ENCODE measurements at regions of chr19 and their contacts with region 1.

Region 1: DNA sequence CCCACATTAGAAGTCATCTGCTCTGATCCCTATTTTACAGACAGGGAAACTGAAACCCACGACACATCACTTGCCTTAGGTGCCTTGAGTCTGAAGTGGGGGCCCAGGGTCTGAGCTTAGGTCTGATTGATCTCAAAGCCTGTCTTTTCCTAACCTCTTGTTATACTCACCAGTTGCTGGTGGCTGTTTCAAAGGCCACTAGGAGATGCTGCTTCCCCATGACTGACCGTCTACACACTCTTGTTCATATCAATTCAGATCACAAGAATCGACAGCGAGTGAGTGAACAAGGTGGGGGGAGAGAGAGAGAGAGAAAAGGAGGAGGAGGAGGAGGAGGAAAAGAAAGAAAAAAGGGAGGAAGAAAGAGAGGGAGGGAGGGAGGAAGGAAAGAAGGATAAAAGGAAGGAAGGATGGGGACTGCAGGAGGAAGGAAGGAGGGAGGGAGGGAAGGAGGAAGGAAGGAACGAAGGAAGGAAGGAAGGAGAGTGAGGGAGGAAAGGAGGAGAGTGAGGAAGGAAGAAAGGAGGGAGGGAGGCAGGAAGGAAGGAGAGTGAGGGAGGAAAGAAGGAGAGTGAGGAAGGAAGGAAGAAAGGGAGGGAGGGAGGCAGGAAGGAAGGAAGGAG is 3.3 kb downstream of the OR10H1 start:
- DNase-seq: no peak
- ATAC-seq: no peak
- H3K4me3 ChIP-seq: no peak overlapping the region
- H3K27ac ChIP-seq: no peak overlapping the region
- H3K4me1 ChIP-seq: no peaks in the 10 kb centered on the region
- H3K27me3 ChIP-seq: no peaks in the 10 kb centered on the region; a peak in 1 of 5 replicates
- CTCF ChIP-seq: peak; percentile 38; the same call in 1 of the 2 replicates
- EP300 ChIP-seq: no peak
- POLR2A ChIP-seq: no peak
- RAD21 ChIP-seq: no peak

Region 2: DNA sequence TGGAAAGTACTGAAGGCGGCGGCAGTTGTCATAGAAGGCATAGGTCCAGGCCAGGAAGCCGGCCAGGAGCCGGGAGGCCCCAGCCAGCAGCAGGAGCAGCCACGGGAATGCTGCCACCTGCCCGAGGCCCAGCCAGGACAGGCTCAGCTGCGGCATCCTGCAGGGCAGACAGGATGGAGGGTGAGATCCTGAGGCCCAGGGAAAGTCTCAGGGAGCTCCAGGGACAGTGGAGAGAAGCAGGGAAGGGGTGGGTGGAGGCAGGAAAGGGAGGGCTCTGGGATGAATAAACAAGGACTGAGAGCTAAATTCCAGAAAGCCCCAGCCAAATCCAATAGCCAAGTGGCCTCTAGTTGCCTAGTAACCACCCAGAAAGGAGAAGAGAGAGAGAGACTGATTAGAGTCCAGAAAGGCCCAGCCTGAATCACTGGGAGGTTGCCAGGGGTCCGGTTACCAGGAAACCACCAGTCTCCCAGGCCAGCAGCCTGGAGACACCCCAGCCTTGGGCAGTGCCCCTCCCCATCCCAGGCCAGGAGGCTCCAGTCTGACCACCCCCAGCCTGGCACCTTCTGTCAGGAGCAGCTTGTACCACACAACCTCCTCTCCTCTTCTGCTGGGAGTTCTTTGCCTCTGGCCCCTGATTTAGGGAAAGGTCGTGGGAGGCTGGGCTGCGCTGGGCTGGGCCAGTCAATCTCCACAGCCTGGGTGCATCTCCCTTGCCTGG is 32.3 kb before region 1 on chr19:
- CTCF ChIA-PET with region 1: no interaction called
- POLR2A ChIA-PET with region 1: no interaction called
- in situ Hi-C with region 1: no loop called
- intact Hi-C with region 1: loop called (anchors 1 kb)
- DNase-seq: peak; percentile 45
- ATAC-seq: peak; percentile 65
- H3K4me3 ChIP-seq: no peak overlapping the region
- H3K27ac ChIP-seq: no peak overlapping the region
- H3K4me1 ChIP-seq: no peaks in the 10 kb centered on the region
- H3K27me3 ChIP-seq: no peaks in the 10 kb centered on the region; a peak in 1 of 5 replicates
- CTCF ChIP-seq: no peak
- EP300 ChIP-seq: no peak
- POLR2A ChIP-seq: no peak
- RAD21 ChIP-seq: no peak

Region 3: DNA sequence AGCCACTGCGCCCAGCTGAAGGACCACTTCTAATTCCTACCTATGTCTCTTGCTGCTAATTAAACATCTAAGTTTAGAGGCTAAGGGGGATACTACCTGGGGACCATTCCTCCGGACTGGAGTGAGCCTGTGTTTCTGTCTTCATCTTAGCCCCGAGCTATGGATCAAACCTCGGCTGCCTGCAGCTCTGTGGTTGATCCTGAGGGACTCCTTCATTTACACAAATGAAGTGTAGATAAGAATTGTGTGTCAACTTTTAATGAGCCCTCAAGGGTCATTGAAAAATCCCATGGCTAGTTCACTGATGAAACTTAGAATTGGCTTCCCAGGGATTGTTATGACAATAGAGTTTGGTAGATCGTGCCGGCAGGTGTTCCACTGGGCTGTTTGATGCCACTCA is 34.8 kb after region 1 on chr19:
- CTCF ChIA-PET with region 1: no interaction called
- POLR2A ChIA-PET with region 1: no interaction called
- in situ Hi-C with region 1: no loop called
- intact Hi-C with region 1: no loop called
- DNase-seq: no peak
- ATAC-seq: no peak
- H3K4me3 ChIP-seq: no peak overlapping the region
- H3K27ac ChIP-seq: no peak overlapping the region
- H3K4me1 ChIP-seq: no peaks in the 10 kb centered on the region
- H3K27me3 ChIP-seq: peaks cover 0 to 5% of the 10 kb centered on the region in 2 experiments; a peak in 3 of 5 replicates
- CTCF ChIP-seq: no peak
- EP300 ChIP-seq: no peak
- POLR2A ChIP-seq: no peak
- RAD21 ChIP-seq: no peak

Region 4: DNA sequence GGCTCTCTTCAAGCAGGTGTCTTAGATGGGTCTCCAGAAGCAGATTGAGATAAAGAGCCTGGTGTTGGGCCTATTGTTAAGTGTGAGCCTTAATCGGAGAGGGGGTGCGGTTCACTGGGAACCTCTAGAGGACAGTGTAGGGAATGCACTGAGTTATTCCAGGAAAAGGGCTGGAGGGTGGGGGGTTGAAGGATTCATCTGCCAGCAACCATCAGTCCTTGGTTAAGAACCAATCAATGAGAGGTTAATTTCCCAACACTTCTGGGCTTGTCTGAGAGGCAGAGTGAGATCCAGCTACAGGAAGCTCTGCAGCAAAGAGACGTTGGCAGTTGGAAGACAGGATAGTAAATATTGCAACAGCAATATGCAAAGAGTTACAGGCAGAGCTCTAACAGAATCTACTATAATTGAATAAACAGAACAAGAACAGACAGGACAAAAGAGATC is 57.0 kb after region 1 on chr19:
- CTCF ChIA-PET with region 1: no interaction called
- POLR2A ChIA-PET with region 1: no interaction called
- in situ Hi-C with region 1: no loop called
- intact Hi-C with region 1: no loop called
- DNase-seq: peak; percentile 60
- ATAC-seq: peak; percentile 93
- H3K4me3 ChIP-seq: no peak overlapping the region
- H3K27ac ChIP-seq: no peak overlapping the region
- H3K4me1 ChIP-seq: 0 out of 2 replicates have a peak, but pooled peaks cover 12% of the 10 kb centered on the region
- H3K27me3 ChIP-seq: no peaks in the 10 kb centered on the region
- CTCF ChIP-seq: peak; percentile 72
- EP300 ChIP-seq: no peak
- POLR2A ChIP-seq: no peak
- RAD21 ChIP-seq: peak; percentile 57

Region 5: GRCh38 chr19:16482736-16483135 is 670.6 kb after region 1 on chr19:
- CTCF ChIA-PET with region 1: no interaction called
- POLR2A ChIA-PET with region 1: no interaction called
- in situ Hi-C with region 1: no loop called
- intact Hi-C with region 1: no loop called
- DNase-seq: no peak
- ATAC-seq: no peak
- H3K4me3 ChIP-seq: no peak overlapping the region
- H3K27ac ChIP-seq: no peak overlapping the region
- H3K4me1 ChIP-seq: peaks cover 43% of the 10 kb centered on the region
- H3K27me3 ChIP-seq: no peaks in the 10 kb centered on the region
- CTCF ChIP-seq: no peak
- EP300 ChIP-seq: no peak
- POLR2A ChIP-seq: no peak
- RAD21 ChIP-seq: no peak